Caco-2 (cell line): ENCODE measurements at regions of chr5 and their contacts with region 1.

Region 1: DNA sequence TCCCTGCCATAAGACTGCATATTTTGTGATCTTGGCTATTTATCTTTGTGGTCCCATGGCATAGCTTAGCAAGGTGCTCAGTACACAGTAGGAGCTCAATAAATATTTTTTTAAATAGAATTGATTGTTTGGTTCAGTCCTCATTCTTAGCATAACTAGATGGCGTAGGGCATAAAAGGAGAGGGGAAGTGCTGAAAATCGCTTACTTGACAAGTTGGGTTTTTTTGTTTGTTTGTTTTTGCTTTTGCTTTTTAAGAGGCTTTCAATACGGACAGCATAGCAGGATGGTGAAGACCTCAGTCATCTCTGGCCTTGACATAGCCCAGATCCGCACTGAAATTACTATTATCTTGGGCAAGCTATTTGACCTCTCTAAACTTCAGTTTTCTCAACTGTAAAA is 86.6 kb upstream of the RANBP3L start:
- DNase-seq: no peak
- H3K4me3 ChIP-seq: no peak overlapping the region
- H3K4me3 Mint-ChIP-seq: no peak overlapping the region
- H3K27ac Mint-ChIP-seq: no peak overlapping the region
- H3K4me1 ChIP-seq: peaks cover 4% of the 10 kb centered on the region; the same call in 1 of the 2 replicates
- H3K4me1 Mint-ChIP-seq: peaks cover 21% of the 10 kb centered on the region
- H3K27me3 ChIP-seq: no peaks in the 10 kb centered on the region
- H3K27me3 Mint-ChIP-seq: no peaks in the 10 kb centered on the region
- CTCF ChIP-seq: no peak

Region 2: GRCh38 chr5:36367524-36367923 is 20.8 kb before region 1 on chr5:
- CTCF ChIA-PET with region 1: interaction called, 3 read pairs
- POLR2A ChIA-PET with region 1: no interaction called
- intact Hi-C with region 1: loop called (anchors 1 kb)
- DNase-seq: peak in 1 of 2 experiments; percentile 51
- H3K4me3 ChIP-seq: no peak overlapping the region
- H3K4me3 Mint-ChIP-seq: no peak overlapping the region
- H3K27ac Mint-ChIP-seq: peak overlapping the region; percentile 1
- H3K4me1 ChIP-seq: peaks cover 21% of the 10 kb centered on the region
- H3K4me1 Mint-ChIP-seq: peaks cover 25% of the 10 kb centered on the region
- H3K27me3 ChIP-seq: no peaks in the 10 kb centered on the region
- H3K27me3 Mint-ChIP-seq: no peaks in the 10 kb centered on the region
- CTCF ChIP-seq: no peak